Left ventricle myocardium inferior (tissue), 1 donor: ENCODE measurements at regions of chr20 and their contacts with region 1.

Region 1: DNA sequence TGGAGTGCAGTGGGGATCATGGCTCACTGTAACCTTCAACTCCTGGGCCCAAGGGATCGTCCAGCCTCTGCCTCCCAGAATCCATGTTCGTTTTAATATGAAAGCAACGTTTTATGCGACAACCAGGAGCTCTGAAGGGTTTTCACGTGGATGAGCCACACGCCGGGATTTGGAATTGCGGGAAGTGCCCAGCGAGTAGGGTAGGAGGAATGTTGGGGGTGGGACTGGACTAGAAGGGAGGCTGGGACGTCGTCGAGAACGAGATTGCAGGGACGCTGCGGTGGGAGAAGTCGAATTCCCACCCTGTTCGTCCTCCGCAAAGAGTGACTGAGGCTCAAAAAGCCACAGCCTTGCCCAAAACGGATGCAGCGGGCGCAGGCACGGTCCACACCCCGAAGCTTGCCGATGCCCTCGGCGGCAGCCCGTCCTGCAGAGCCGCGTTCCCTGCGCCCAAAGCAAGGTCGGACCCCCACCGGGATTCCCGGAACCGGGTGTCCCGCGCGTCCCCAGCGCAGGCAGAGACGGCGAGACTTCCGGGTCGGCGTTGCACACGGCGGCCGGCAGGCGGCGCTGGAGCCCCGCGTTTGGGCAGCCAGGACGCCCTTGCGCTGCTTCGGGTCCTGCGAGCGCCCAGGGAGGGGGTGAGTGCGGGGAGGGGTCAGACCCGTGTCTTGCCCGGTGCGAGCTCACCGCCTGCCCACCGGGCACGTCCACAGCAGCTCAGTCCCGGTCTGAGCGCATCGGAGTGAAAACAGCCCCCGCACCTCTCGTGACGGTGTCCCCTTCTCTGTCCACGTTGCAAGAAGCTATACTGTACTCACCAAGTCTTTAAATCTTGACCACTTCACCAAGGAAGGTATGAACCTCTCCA is 87.8 kb downstream of the DHX35 start:
- DNase-seq: peak; percentile 75
- H3K4me3 ChIP-seq: peak overlapping the region; percentile 82
- H3K27ac ChIP-seq: peak overlapping the region; percentile 42
- H3K4me1 ChIP-seq: peaks cover 14% of the 10 kb centered on the region
- H3K27me3 ChIP-seq: peaks cover 14% of the 10 kb centered on the region
- CTCF ChIP-seq: peak; percentile 97

Region 2: GRCh38 chr20:38714308-38714707 is 335.6 kb before region 1 on chr20:
- intact Hi-C with region 1: no loop called
- DNase-seq: no peak
- H3K4me3 ChIP-seq: no peak overlapping the region
- H3K27ac ChIP-seq: no peak overlapping the region
- H3K4me1 ChIP-seq: no peaks in the 10 kb centered on the region
- H3K27me3 ChIP-seq: peaks cover 100% of the 10 kb centered on the region
- CTCF ChIP-seq: no peak

Region 3: DNA sequence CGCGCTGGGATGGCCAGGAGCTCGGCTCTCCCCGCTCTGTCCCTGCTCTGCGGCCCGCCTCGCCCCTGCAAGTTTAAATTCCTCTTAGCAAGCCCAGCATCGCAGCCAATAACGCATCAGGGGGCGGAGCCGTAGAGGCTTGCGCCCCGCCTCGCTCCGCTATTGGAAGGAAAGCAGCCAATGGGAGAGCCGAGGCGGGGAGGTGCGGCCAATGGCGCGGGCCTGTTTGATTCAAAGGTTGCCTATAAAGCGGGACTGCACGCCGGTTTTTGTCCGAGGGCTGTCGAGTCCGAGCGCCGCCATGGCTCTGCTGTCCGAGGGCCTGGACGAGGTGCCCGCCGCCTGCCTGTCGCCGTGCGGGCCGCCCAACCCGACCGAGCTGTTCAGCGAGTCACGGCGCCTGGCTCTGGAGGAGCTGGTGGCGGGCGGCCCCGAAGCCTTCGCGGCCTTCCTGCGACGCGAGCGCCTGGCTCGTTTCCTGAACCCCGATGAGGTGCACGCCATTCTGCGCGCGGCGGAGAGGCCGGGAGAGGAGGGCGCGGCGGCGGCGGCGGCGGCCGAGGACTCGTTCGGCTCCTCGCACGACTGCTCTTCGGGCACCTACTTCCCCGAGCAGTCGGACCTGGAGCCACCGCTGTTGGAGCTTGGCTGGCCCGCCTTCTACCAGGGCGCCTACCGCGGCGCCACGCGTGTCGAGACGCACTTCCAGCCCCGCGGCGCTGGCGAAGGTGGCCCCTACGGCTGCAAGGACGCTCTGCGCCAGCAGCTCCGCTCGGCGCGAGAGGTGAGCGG is 123.6 kb before region 1 on chr20 and contains the start of gene FAM83D:
- intact Hi-C with region 1: loop called (anchors 10 kb)
- DNase-seq: peak; percentile 93
- H3K4me3 ChIP-seq: peak within 1 kb of the TSS; percentile 71
- H3K27ac ChIP-seq: peak within 1 kb of the TSS; percentile 9
- H3K4me1 ChIP-seq: peaks cover 22% of the 10 kb centered on the region
- H3K27me3 ChIP-seq: peaks cover under 1% of the 10 kb centered on the region
- CTCF ChIP-seq: peak; percentile 7
- total RNA-seq, gene FAM83D: 0.77 TPM

Region 4: DNA sequence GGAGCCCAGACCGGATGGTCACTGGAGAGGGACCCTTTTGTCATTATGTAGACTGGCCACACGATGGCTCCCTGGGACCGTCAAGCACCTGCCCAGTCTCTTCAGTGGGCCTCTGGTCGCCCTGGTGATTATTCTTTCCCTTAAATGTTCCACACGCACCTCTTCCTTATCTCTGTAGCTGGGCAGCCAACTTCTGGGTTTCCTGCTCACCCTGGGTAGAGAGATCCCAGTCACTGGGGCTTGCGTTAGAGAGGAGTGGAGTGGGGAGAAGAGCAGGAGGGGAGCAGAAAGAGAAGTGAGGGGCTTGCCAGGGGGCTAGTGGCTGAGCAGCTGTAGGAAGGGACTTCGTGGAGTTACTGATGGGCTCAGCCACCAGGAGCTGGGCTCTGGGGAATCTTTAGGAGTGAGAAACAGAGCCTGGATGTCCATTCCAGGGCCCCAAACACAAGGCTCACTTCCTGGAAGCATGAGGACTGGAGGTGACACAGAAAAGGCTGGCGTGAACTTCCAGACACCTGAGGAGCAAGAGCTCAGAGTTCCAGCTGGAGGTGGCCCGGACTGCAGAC is 62.3 kb after region 1 on chr20:
- intact Hi-C with region 1: no loop called
- DNase-seq: no peak
- H3K4me3 ChIP-seq: no peak overlapping the region
- H3K27ac ChIP-seq: no peak overlapping the region
- H3K4me1 ChIP-seq: peaks cover 5% of the 10 kb centered on the region
- H3K27me3 ChIP-seq: peaks cover 88% of the 10 kb centered on the region
- CTCF ChIP-seq: peak; percentile 73

Region 5: GRCh38 chr20:39225536-39225935 is 175.6 kb after region 1 on chr20:
- intact Hi-C with region 1: no loop called
- DNase-seq: no peak
- H3K4me3 ChIP-seq: no peak overlapping the region
- H3K27ac ChIP-seq: no peak overlapping the region
- H3K4me1 ChIP-seq: no peaks in the 10 kb centered on the region
- H3K27me3 ChIP-seq: peaks cover 53% of the 10 kb centered on the region
- CTCF ChIP-seq: no peak